Naive thymus-derived CD4-positive, alpha-beta T cell (primary cell): ENCODE measurements at regions of chr5 and their contacts with region 1.

Region 1: GRCh38 chr5:141878711-141879425 is 658 bp upstream of the PCDH1 start:
- DNase-seq: peak; percentile 73 to 94 (median 88)
- ATAC-seq: peak; percentile 92
- H3K4me3 ChIP-seq: peak overlapping the region; percentile 44
- H3K4me3 Mint-ChIP-seq: peak overlapping the region; percentile 77 to 91 (median 84)
- H3K27ac ChIP-seq: no peak overlapping the region
- H3K27ac Mint-ChIP-seq: peak overlapping the region in 5 of 9 donors; percentile 0 to 47 (median 11)
- H3K4me1 ChIP-seq: peaks cover 24 to 26% of the 10 kb centered on the region in 2 donors
- H3K4me1 Mint-ChIP-seq: peaks cover 20 to 33% (median 28%) of the 10 kb centered on the region in 7 donors
- H3K27me3 ChIP-seq: peaks cover 8 to 32% of the 10 kb centered on the region in 2 donors
- H3K27me3 Mint-ChIP-seq: peaks cover 66 to 88% (median 75%) of the 10 kb centered on the region in 5 donors

Region 2: GRCh38 chr5:141412854-141413539 is 465.9 kb before region 1 on chr5 and contains the start of gene PCDHGA10:
- CTCF ChIA-PET with region 1: no interaction called
- POLR2A ChIA-PET with region 1: no interaction called
- intact Hi-C with region 1: loop called in 1 of 2 experiments (anchors 10 kb)
- DNase-seq: peak in 7 of 9 donors; percentile 38 to 66 (median 52)
- ATAC-seq: peak; percentile 84
- H3K4me3 ChIP-seq: peak within 1 kb of the TSS; percentile 73
- H3K4me3 Mint-ChIP-seq: peak within 1 kb of the TSS; percentile 83 to 92 (median 87)
- H3K27ac ChIP-seq: no peak within 1 kb of the TSS
- H3K27ac Mint-ChIP-seq: peak within 1 kb of the TSS in 2 of 9 donors; percentile 54 to 56
- H3K4me1 ChIP-seq: peaks cover 0 to 5% of the 10 kb centered on the region in 2 donors
- H3K4me1 Mint-ChIP-seq: peaks cover 13 to 27% (median 19%) of the 10 kb centered on the region in 7 donors
- H3K27me3 ChIP-seq: peaks cover 23% of the 10 kb centered on the region in 2 donors
- H3K27me3 Mint-ChIP-seq: peaks cover 69 to 80% (median 75%) of the 10 kb centered on the region in 5 donors
- total RNA-seq, gene PCDHGA10: 0.11 to 0.39 (median 0.24) TPM

Region 3: DNA sequence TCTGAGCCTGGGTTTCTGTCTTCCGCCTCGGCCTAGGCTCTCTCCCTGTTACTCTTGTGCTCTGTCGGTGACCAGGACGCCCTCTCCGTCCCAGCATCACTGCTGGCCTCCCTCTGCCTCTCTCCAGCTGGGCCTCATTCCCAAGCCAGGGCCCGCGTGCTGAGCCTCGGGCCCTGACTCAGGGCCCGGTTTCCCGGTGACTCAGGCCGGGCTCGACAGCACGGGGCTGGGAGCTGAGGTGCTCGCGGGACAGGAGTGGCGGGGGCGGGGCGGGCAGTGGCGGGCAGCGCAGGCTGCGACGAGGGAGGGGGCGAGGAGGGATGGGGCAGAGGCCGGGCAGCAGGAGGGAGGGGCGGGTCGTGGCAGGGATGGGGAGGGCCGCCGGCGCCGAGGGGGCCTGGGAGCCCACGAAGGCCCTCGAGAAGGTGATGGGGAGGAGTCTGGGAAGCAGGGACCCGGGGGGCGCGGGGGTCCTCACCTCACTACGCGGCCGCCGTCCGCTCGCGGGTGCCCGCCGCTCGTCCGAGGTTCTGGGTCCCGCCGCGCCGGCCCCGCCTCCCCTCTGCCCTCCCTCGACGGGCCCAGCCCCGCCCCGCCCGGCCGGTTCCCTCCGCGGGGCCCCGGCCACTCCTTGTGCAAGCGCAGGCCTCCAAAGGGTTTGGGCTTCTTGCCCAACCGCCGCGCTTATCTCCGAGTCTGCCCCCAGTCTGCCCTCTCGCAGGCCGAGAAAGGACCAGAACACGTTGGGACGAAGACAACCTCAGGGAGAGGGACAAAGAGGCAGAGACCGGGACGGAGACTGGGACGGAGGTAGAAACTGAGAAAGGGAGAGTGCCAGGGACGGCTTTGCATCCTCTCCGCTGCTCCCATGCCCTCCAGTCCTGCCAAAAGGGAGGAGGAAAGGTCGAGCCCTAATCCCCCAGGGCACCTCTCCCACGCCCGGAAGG is 196.9 kb before region 1 on chr5 and contains the start of gene ARAP3:
- CTCF ChIA-PET with region 1: interaction called, 10 read pairs
- POLR2A ChIA-PET with region 1: interaction called, 4 read pairs
- intact Hi-C with region 1: no loop called
- DNase-seq: peak in 2 of 9 donors; percentile 35 to 64
- ATAC-seq: peak; percentile 84
- H3K4me3 ChIP-seq: peak within 1 kb of the TSS; percentile 64
- H3K4me3 Mint-ChIP-seq: peak within 1 kb of the TSS; percentile 65 to 84 (median 78)
- H3K27ac ChIP-seq: peak within 1 kb of the TSS; percentile 32
- H3K27ac Mint-ChIP-seq: peak within 1 kb of the TSS in 8 of 9 donors; percentile 4 to 77 (median 46)
- H3K4me1 ChIP-seq: peaks cover 14 to 16% of the 10 kb centered on the region in 2 donors
- H3K4me1 Mint-ChIP-seq: peaks cover 15 to 36% (median 27%) of the 10 kb centered on the region in 7 donors
- H3K27me3 ChIP-seq: no peaks in the 10 kb centered on the region
- H3K27me3 Mint-ChIP-seq: no peaks in the 10 kb centered on the region
- total RNA-seq, gene ARAP3: 1.0 to 15.3 (median 9.8) TPM

Region 4: GRCh38 chr5:141780952-141781730 is 97.7 kb before region 1 on chr5:
- CTCF ChIA-PET with region 1: interaction called, 3 read pairs
- POLR2A ChIA-PET with region 1: no interaction called
- intact Hi-C with region 1: loop called in 1 of 2 experiments (anchors 2 kb)
- DNase-seq: no peak
- ATAC-seq: peak; percentile 24
- H3K4me3 ChIP-seq: no peak overlapping the region
- H3K4me3 Mint-ChIP-seq: no peak overlapping the region
- H3K27ac ChIP-seq: no peak overlapping the region
- H3K27ac Mint-ChIP-seq: no peak overlapping the region
- H3K4me1 ChIP-seq: no peaks in the 10 kb centered on the region
- H3K4me1 Mint-ChIP-seq: peaks cover 0 to 4% (median 0%) of the 10 kb centered on the region in 7 donors
- H3K27me3 ChIP-seq: no peaks in the 10 kb centered on the region
- H3K27me3 Mint-ChIP-seq: peaks cover 0 to 12% (median 4%) of the 10 kb centered on the region in 5 donors

Region 5: GRCh38 chr5:141849375-141850243 is 29.3 kb before region 1 on chr5:
- CTCF ChIA-PET with region 1: interaction called, 7 read pairs
- POLR2A ChIA-PET with region 1: no interaction called
- intact Hi-C with region 1: loop called (anchors 1 kb)
- DNase-seq: peak; percentile 41 to 77 (median 56)
- ATAC-seq: peak; percentile 82
- H3K4me3 ChIP-seq: peak overlapping the region; percentile 98
- H3K4me3 Mint-ChIP-seq: peak overlapping the region; percentile 86 to 93 (median 89)
- H3K27ac ChIP-seq: peak overlapping the region; percentile 74
- H3K27ac Mint-ChIP-seq: peak overlapping the region; percentile 54 to 98 (median 88)
- H3K4me1 ChIP-seq: no peaks in the 10 kb centered on the region
- H3K4me1 Mint-ChIP-seq: peaks cover 6 to 24% (median 12%) of the 10 kb centered on the region in 7 donors
- H3K27me3 ChIP-seq: no peaks in the 10 kb centered on the region
- H3K27me3 Mint-ChIP-seq: peaks cover 0 to 2% (median 0%) of the 10 kb centered on the region in 5 donors

Region 6: DNA sequence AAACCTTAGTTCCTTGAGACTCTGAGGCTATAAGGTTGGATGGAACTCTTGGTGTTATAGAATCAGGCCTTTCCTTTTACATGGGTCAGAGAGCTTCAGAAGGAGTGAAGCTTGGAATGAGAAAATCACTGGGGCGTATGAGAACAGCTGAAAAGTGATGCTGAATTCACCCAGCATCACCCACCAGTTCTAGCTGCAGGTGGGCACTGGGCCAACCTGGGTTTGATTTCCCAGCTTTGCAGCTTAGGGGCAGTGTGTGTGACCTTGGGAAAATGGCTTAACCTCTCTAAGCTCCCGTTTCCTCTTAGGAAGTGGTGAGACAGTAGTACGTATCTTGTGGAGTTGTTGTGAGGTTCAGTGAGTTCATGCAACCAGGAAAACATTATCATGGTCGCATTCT is 68.4 kb after region 1 on chr5:
- CTCF ChIA-PET with region 1: no interaction called
- POLR2A ChIA-PET with region 1: no interaction called
- intact Hi-C with region 1: no loop called
- DNase-seq: no peak
- ATAC-seq: no peak
- H3K4me3 ChIP-seq: no peak overlapping the region
- H3K4me3 Mint-ChIP-seq: no peak overlapping the region
- H3K27ac ChIP-seq: no peak overlapping the region
- H3K27ac Mint-ChIP-seq: peak overlapping the region in 2 of 9 donors; percentile 46 to 60
- H3K4me1 ChIP-seq: peaks cover 0 to 8% of the 10 kb centered on the region in 2 donors
- H3K4me1 Mint-ChIP-seq: peaks cover 6 to 22% (median 13%) of the 10 kb centered on the region in 7 donors
- H3K27me3 ChIP-seq: no peaks in the 10 kb centered on the region
- H3K27me3 Mint-ChIP-seq: no peaks in the 10 kb centered on the region

Region 7: DNA sequence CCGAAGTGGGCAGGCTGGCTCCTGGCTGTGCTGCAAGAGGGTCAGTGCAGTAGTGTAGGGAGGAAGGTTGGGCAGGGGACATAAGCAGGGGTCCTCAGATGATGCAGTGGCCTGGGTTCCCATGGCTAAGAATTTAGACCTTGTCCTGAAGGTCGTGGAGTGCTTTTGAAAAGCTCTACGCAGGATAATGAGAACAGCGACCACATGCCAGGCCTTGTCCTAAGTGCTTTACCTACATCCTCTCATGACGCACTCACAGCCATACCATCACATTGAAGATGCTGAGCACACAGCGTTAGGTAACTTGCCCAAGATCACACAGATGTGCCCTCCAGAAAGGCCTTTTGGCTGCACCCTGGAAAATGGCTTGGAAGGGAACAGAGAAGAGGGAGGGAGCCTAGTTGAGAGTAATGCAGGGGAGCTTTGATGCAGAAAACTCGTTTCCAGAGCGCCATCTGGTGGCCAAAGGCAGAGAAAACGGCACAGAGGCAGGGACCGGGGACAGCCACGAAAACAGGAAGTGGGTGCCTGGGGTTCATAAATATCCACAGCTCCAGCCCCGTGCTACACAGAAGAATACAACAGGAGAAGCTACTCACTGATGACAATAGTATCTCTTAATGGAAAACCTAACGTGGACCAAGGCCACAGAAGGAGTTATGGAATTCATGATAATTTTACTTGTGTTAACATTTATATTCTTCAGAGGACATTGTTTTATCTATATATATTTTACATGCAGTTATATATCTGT is 81.8 kb after region 1 on chr5:
- CTCF ChIA-PET with region 1: interaction called, 87 read pairs
- POLR2A ChIA-PET with region 1: interaction called, 12 read pairs
- intact Hi-C with region 1: loop called (anchors 1 to 2 kb)
- DNase-seq: peak; percentile 82 to 95 (median 89)
- ATAC-seq: peak; percentile 94
- H3K4me3 ChIP-seq: peak overlapping the region; percentile 7
- H3K4me3 Mint-ChIP-seq: peak overlapping the region; percentile 5 to 75 (median 54)
- H3K27ac ChIP-seq: peak overlapping the region; percentile 50
- H3K27ac Mint-ChIP-seq: peak overlapping the region; percentile 82 to 93 (median 92)
- H3K4me1 ChIP-seq: peaks cover 30 to 43% of the 10 kb centered on the region in 2 donors
- H3K4me1 Mint-ChIP-seq: peaks cover 29 to 51% (median 40%) of the 10 kb centered on the region in 7 donors
- H3K27me3 ChIP-seq: no peaks in the 10 kb centered on the region
- H3K27me3 Mint-ChIP-seq: no peaks in the 10 kb centered on the region

Region 8: GRCh38 chr5:143134900-143135299 is 1256.0 kb after region 1 on chr5:
- CTCF ChIA-PET with region 1: no interaction called
- POLR2A ChIA-PET with region 1: no interaction called
- intact Hi-C with region 1: no loop called
- DNase-seq: no peak
- ATAC-seq: no peak
- H3K4me3 ChIP-seq: no peak overlapping the region
- H3K4me3 Mint-ChIP-seq: no peak overlapping the region
- H3K27ac ChIP-seq: no peak overlapping the region
- H3K27ac Mint-ChIP-seq: no peak overlapping the region
- H3K4me1 ChIP-seq: no peaks in the 10 kb centered on the region
- H3K4me1 Mint-ChIP-seq: peaks cover 0 to 11% (median 0%) of the 10 kb centered on the region in 7 donors
- H3K27me3 ChIP-seq: no peaks in the 10 kb centered on the region
- H3K27me3 Mint-ChIP-seq: no peaks in the 10 kb centered on the region